ENCODE measurements at regions of chr14 and their contacts with region 1.

Region 1: GRCh38 chr14:94180655-94181271 is 6.6 kb downstream of the PPP4R4 start:
- DNase-seq: no peak
- H3K4me3 ChIP-seq: peak overlapping the region in 1 of 4 donors; percentile 34
- H3K27ac ChIP-seq: no peak overlapping the region
- H3K4me1 ChIP-seq: no peaks in the 10 kb centered on the region
- H3K27me3 ChIP-seq: peaks cover 23% of the 10 kb centered on the region
- CTCF ChIP-seq: peak; percentile 42 to 79 (median 61)
- POLR2A ChIP-seq: no peak

Region 2: DNA sequence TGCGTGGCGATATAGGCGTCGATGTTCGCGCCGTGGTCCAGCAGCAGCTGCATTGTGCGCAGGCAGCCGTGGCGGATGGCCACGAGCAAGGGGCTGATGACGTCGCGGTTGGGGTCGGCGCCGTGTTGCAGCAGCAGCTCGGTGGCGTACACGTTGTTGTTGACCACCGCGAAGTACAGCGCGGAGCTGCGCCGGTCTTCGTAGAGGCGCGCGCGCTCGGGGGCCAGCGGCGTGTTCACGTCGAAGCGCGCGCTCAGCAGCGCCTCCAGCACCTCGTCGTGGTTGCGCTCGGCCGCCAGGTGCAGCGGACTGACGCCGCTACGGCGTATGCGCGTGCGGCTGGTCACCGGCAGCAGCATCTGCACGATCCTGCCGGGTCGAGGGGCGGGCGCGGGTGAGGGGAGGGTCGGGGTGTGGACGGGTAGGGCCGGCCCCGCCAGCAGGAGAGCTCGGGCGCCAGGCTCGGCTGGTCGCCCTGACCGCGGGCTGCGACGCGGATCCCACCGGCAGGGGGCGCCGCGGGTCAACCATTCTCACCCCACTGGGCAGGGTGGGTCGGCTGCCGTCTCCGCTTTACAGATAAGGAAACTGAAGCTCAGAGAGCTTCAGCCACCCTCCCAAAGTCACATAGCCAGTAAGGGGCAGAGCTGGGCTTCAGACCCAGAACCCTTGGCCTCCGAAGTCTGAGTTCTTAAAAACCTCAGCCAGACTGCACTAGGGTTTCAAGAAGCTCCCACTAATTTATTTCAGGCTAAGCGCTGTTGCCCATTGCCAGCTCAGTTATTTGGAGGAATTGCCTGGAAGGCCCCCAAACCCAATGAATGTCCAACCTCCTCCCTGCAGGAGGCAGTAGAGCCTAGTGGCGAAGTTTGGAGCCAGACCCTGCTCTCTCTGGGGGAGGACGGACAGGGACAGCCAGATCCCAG is 241.2 kb before region 1 on chr14:
- intact Hi-C with region 1: loop called in 1 of 2 experiments (anchors 10 kb)
- DNase-seq: peak; percentile 75 to 89 (median 84)
- H3K4me3 ChIP-seq: peak overlapping the region in 1 of 4 donors; percentile 54
- H3K27ac ChIP-seq: no peak overlapping the region
- H3K4me1 ChIP-seq: peaks cover 0 to 13% of the 10 kb centered on the region in 2 donors
- H3K27me3 ChIP-seq: peaks cover 17% of the 10 kb centered on the region
- CTCF ChIP-seq: peak; percentile 68 to 94 (median 84)
- POLR2A ChIP-seq: no peak

Region 3: DNA sequence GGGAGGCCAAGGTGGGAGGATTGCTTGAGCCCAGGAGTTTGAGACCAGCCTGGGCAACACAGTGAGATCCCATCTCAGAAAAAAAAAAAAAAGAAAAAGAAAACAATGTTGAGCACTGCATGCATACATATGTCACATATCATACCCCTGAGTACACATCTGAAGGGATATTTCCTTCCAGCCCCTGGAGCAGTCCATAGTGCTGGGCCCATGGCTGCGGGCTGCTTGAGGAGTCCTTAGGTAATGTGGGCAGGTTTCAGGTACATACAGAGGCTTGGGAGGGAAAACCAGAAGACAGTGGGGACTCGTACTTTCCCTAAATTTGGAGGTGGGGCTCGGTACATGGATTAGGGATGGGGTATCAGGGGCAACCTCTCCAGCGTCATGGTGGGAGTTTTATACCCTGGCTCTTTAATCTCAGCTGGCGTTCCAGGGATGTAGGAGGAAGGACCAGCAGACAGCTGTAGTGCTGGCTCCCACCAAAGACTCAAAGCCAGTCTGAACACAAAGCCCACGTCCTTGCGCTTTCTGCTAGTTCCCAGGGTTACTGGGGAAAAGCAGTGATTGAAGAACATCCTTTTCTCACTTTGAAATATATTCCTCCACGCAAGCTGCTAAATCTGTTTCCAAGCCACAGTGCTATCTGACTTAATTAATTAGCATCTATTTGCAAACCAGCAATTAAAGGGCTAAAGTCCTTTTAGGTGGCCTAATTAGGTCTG is 149.4 kb before region 1 on chr14:
- intact Hi-C with region 1: loop called in 1 of 2 experiments (anchors 5 kb)
- DNase-seq: no peak
- H3K4me3 ChIP-seq: no peak overlapping the region
- H3K27ac ChIP-seq: no peak overlapping the region
- H3K4me1 ChIP-seq: peaks cover 0 to 12% of the 10 kb centered on the region in 2 donors
- H3K27me3 ChIP-seq: no peaks in the 10 kb centered on the region
- CTCF ChIP-seq: no peak
- POLR2A ChIP-seq: no peak

Region 4: DNA sequence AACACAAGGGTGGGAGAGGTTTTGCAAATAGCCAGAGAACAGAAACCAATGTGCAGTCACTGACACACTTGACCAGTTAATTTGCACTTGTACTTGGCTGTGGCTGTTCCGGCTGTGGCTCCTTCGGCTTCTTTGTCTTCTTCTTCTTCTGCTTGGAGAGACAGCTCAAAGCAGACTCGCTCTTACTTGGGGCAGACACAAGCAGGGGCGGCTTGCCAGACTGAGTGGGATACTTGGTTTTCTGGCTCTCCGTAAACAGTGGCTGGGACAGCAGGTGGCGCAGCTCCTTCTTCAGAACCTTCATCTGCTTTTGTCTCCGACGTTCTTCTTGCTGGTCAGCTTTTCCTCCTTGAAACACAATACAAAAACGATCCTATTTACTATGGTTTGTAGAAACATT is 129.6 kb before region 1 on chr14:
- intact Hi-C with region 1: no loop called
- DNase-seq: peak in 6 of 7 donors; percentile 46 to 73 (median 63)
- H3K4me3 ChIP-seq: no peak overlapping the region
- H3K27ac ChIP-seq: peak overlapping the region in 3 of 5 donors; percentile 7 to 13 (median 9)
- H3K4me1 ChIP-seq: peaks cover 7% of the 10 kb centered on the region in 2 donors
- H3K27me3 ChIP-seq: no peaks in the 10 kb centered on the region
- CTCF ChIP-seq: peak in 5 of 6 experiments; percentile 35 to 49 (median 42)
- POLR2A ChIP-seq: no peak

Region 5: GRCh38 chr14:94355191-94355797 is 174.5 kb after region 1 on chr14:
- intact Hi-C with region 1: no loop called
- DNase-seq: no peak
- H3K4me3 ChIP-seq: no peak overlapping the region
- H3K27ac ChIP-seq: no peak overlapping the region
- H3K4me1 ChIP-seq: no peaks in the 10 kb centered on the region
- H3K27me3 ChIP-seq: no peaks in the 10 kb centered on the region
- CTCF ChIP-seq: peak in 2 of 6 experiments; percentile 10 to 17
- POLR2A ChIP-seq: no peak

Region 6: GRCh38 chr14:94888121-94888520 is 707.4 kb after region 1 on chr14:
- intact Hi-C with region 1: no loop called
- DNase-seq: peak in 3 of 7 donors; percentile 23 to 39 (median 32)
- H3K4me3 ChIP-seq: no peak overlapping the region
- H3K27ac ChIP-seq: no peak overlapping the region
- H3K4me1 ChIP-seq: peaks cover 0 to 4% of the 10 kb centered on the region in 2 donors
- H3K27me3 ChIP-seq: no peaks in the 10 kb centered on the region
- CTCF ChIP-seq: no peak
- POLR2A ChIP-seq: no peak